Naive thymus-derived CD8-positive, alpha-beta T cell (primary cell): ENCODE measurements at regions of chr12 and their contacts with region 1.

Region 1: DNA sequence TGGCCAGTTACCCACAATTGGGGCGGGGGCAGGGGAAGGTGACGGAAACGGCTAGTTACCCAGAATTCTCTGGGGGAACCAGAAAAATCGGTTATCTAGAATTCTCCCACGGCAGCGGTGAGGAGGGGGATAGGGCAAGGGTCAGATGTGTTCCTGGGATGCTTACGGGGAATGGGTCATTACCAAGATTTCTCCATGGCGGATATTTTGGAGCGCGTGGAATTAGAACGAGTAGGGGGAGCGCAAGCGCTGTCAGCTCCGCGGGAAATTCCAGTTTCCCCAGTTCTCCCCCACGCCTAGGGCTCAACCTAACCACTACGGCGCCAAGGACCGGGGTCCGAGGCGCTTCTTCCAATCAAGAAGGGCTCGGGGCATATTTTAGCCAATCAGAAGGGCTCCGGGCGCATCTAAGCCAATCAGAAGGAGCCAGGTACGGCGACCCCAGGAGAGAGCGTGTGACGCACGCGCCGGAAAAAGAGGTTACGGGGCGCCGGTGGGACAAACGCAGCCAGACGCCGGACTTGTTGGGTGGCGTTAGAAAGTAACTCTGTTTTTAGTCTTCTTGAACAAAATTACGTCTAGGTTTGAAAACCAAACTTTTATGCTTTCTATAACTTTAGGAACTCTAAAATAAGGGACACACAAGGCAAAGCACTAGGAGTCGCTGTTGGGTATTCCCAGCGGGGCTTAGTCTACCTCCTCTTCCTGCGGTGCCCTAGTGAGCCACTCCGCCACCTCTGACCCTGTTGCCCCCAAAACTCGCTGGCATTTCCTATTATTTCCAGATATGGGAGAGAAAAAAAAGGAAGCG is at the start of gene PAN2:
- DNase-seq: peak; percentile 78 to 96 (median 93)
- ATAC-seq: peak; percentile 81 to 87
- H3K4me3 Mint-ChIP-seq: peak within 1 kb of the TSS; percentile 87 to 99 (median 94)
- H3K27ac Mint-ChIP-seq: peak within 1 kb of the TSS; percentile 99 to 100 (median 99)
- H3K4me1 Mint-ChIP-seq: peaks cover 20 to 53% (median 47%) of the 10 kb centered on the region in 4 donors
- H3K27me3 Mint-ChIP-seq: peaks cover 0 to 1% (median 0%) of the 10 kb centered on the region in 5 donors
- polyA plus RNA-seq, gene PAN2: 10.5 to 11.9 (median 11.0) TPM

Region 2: DNA sequence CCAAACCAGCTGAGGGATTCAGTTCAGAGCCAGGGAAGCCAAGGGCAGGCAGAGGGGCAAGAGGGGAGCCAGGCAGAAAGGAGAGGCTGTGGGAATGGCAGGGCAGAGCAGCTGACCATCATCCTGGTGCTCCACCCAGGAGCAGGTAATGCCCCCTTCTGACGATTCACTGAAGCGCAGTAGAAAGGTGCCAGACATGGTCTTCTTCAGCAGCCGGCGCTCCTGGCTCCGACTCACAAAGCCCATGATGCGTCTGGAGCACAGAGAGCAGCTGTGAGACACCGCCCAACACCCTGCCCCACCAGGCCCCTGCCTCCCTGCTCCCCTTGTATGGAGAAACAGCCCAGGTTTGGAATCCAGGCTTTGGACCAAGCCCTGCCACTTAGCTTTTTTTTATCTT is 12.8 kb after region 1 on chr12:
- POLR2A ChIA-PET with region 1: interaction called, 17 read pairs
- DNase-seq: no peak
- ATAC-seq: no peak
- H3K4me3 Mint-ChIP-seq: no peak overlapping the region
- H3K27ac Mint-ChIP-seq: peak overlapping the region in 3 of 10 donors; percentile 19 to 85 (median 71)
- H3K4me1 Mint-ChIP-seq: peaks cover 0 to 2% (median under 1%) of the 10 kb centered on the region in 4 donors
- H3K27me3 Mint-ChIP-seq: no peaks in the 10 kb centered on the region

Region 3: GRCh38 chr12:56359851-56360767 is 26.2 kb after region 1 on chr12 and contains the start of gene STAT2:
- POLR2A ChIA-PET with region 1: interaction called, 182 read pairs
- DNase-seq: peak; percentile 95 to 100 (median 99)
- ATAC-seq: peak; percentile 95 to 96
- H3K4me3 Mint-ChIP-seq: peak within 1 kb of the TSS; percentile 93 to 99 (median 96)
- H3K27ac Mint-ChIP-seq: peak within 1 kb of the TSS; percentile 93 to 99 (median 96)
- H3K4me1 Mint-ChIP-seq: peaks cover 8 to 38% (median 36%) of the 10 kb centered on the region in 4 donors
- H3K27me3 Mint-ChIP-seq: peaks cover 0 to 1% (median 0%) of the 10 kb centered on the region in 5 donors
- polyA plus RNA-seq, gene STAT2: 61.7 to 68.1 (median 64.5) TPM

Region 4: GRCh38 chr12:56468216-56469006 is 134.5 kb after region 1 on chr12 and contains the start of gene SPRYD4:
- POLR2A ChIA-PET with region 1: interaction called, 11 read pairs
- DNase-seq: peak; percentile 91 to 96 (median 93)
- ATAC-seq: peak; percentile 94 to 96
- H3K4me3 Mint-ChIP-seq: peak within 1 kb of the TSS; percentile 90 to 98 (median 96)
- H3K27ac Mint-ChIP-seq: peak within 1 kb of the TSS; percentile 96 to 99 (median 98)
- H3K4me1 Mint-ChIP-seq: peaks cover 19 to 42% (median 35%) of the 10 kb centered on the region in 4 donors
- H3K27me3 Mint-ChIP-seq: no peaks in the 10 kb centered on the region
- polyA plus RNA-seq, gene SPRYD4: 1.3 to 1.6 (median 1.4) TPM